K562 (cell line): ENCODE measurements at regions of chr10 and their contacts with region 1.

Region 1: DNA sequence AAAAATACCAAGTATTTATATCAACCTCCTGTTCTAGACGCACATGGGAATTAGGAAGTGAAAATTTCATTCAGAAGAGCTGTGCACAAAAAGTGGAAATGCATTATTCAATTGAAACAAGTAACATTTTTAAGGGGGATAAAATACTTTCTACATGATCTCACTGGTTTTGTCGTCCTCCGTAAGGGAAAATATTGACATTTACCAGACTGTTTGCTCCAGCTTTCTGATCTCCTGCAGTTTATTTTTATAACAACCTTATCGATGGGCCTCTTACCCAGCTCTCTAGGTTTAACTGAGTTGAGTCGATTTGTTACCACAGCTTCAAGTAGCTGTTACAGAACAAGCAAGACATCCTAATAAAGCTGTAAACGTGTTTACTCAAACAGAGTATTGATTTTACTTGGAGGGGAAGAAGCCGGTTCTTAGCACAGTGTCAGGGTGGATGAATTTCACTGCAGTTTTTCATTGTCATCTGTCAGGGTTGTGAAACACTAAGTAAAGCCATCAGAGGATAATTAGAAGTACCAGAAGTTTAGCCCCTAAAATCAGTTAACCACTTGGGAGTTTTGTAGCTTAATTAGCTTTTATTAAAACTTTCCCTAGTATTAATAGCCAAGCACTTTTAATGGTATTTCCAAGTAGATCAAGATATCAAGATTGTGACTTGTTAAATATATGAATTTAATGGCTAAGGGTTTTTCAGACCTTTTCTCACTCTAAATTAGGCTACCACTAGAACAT is 142.6 kb upstream of the KAT6B start:
- DNase-seq: no peak
- ATAC-seq: no peak
- H3K4me3 ChIP-seq: no peak overlapping the region
- H3K27ac ChIP-seq: no peak overlapping the region
- H3K4me1 ChIP-seq: no peaks in the 10 kb centered on the region
- H3K27me3 ChIP-seq: no peaks in the 10 kb centered on the region
- CTCF ChIP-seq: no peak
- EP300 ChIP-seq: no peak
- POLR2A ChIP-seq: no peak
- RAD21 ChIP-seq: no peak

Region 2: DNA sequence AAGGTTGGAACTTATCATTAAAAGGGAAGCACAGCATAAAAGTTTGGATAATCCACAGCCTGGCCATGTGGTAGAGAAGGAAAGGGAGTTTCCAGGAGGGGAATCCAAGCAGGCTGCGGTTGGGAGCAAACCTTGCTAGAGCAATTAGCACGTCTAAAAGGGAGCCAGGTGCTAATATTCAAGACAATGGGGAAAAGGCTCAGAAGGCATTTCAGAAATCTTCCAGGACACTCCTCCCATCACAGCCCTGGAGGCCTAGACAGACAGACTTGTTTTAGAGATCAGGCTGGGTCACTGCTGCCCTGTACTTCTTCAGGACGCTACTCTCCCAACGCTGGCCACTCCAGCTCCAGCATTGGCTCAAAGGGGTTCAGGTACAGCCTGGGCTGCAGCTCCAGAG is 46.5 kb after region 1 on chr10:
- CTCF ChIA-PET with region 1: no interaction called
- POLR2A ChIA-PET with region 1: no interaction called
- in situ Hi-C with region 1: no loop called
- intact Hi-C with region 1: loop called (anchors 5 kb)
- DNase-seq: no peak
- ATAC-seq: peak; percentile 28; the same call in 2 of the 3 replicates
- H3K4me3 ChIP-seq: no peak overlapping the region
- H3K27ac ChIP-seq: no peak overlapping the region
- H3K4me1 ChIP-seq: no peaks in the 10 kb centered on the region
- H3K27me3 ChIP-seq: no peaks in the 10 kb centered on the region
- CTCF ChIP-seq: no peak
- EP300 ChIP-seq: no peak
- POLR2A ChIP-seq: no peak
- RAD21 ChIP-seq: no peak

Region 3: GRCh38 chr10:74760086-74760979 is 76.5 kb after region 1 on chr10:
- CTCF ChIA-PET with region 1: no interaction called
- POLR2A ChIA-PET with region 1: no interaction called
- in situ Hi-C with region 1: no loop called
- intact Hi-C with region 1: no loop called
- DNase-seq: no peak
- ATAC-seq: no peak
- H3K4me3 ChIP-seq: no peak overlapping the region
- H3K27ac ChIP-seq: no peak overlapping the region
- H3K4me1 ChIP-seq: no peaks in the 10 kb centered on the region
- H3K27me3 ChIP-seq: peaks cover 35 to 61% of the 10 kb centered on the region in 2 experiments
- CTCF ChIP-seq: no peak
- EP300 ChIP-seq: no peak
- POLR2A ChIP-seq: no peak
- RAD21 ChIP-seq: no peak